ENCODE measurements at regions of chr19 and their contacts with region 1.

Region 1: DNA sequence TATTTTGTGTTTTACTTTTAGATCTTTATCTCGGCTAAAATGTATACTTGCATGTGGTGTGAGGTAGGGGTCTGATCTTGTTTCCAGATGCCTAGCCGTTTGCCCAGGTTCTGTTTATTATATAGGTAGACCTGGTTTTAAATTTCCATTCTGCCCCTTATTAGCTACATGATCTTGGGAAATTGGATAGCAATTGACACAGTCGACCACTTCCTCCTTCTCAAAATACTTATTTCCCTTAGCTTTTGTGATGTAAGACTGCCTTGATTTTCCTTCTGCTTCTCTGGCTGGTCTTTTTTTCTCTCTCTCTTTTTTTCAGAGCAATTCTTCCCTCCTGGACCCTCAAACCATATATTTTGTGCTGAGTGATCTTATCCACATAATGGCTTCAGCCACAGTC is 3.0 kb upstream of the PGLYRP1 start:
- DNase-seq: no peak
- ATAC-seq: no peak
- H3K4me3 ChIP-seq: no peak overlapping the region
- H3K27ac ChIP-seq: no peak overlapping the region
- H3K4me1 ChIP-seq: no peaks in the 10 kb centered on the region
- H3K27me3 ChIP-seq: peaks cover 2% of the 10 kb centered on the region

Region 2: GRCh38 chr19:46076951-46077816 is 51.3 kb after region 1 on chr19:
- intact Hi-C with region 1: loop called in 1 of 4 experiments (anchors 5 kb)
- DNase-seq: peak in 1 of 3 donors; percentile 22
- ATAC-seq: peak; percentile 73 to 86
- H3K4me3 ChIP-seq: no peak overlapping the region
- H3K27ac ChIP-seq: no peak overlapping the region
- H3K4me1 ChIP-seq: no peaks in the 10 kb centered on the region
- H3K27me3 ChIP-seq: peaks cover 4% of the 10 kb centered on the region

Region 3: GRCh38 chr19:46186101-46187100 is 160.6 kb after region 1 on chr19:
- intact Hi-C with region 1: loop called in 1 of 4 experiments (anchors 5 kb)
- DNase-seq: peak in 2 of 3 donors; percentile 52 to 62
- ATAC-seq: peak; percentile 33 to 34
- H3K4me3 ChIP-seq: no peak overlapping the region
- H3K27ac ChIP-seq: no peak overlapping the region
- H3K4me1 ChIP-seq: no peaks in the 10 kb centered on the region
- H3K27me3 ChIP-seq: no peaks in the 10 kb centered on the region

Region 4: DNA sequence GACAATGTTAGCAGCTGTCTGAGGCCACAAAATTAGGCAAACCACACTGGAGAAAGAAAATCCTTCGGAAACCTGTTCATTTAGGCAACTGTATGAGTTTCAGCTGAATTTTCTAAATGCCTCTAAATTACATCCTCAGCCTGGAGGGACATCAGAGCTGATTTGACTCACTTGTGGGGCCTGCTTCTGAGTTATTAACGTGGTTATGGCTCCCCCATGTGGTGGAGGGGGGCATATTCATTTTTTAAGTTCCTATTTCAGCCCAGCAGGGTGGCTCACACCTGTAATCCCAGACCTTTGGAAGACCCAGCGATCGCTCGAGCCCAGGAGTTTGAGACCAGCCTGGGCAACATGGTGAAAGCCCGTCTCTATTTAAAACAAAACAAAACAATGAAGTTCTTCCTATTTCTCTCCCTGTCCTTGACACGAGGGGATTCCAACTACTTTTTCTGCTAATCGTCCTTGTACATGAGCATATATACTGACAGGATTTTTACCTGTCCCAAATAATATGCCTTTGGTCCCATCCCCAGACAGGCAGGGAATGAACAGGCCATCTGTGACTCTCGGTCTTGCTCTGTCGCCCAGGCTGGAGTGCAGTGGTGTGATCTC is 239.5 kb after region 1 on chr19:
- intact Hi-C with region 1: loop called (anchors 2 to 5 kb)
- DNase-seq: peak in 1 of 3 donors; percentile 42
- ATAC-seq: peak; percentile 67 to 85
- H3K4me3 ChIP-seq: no peak overlapping the region
- H3K27ac ChIP-seq: no peak overlapping the region
- H3K4me1 ChIP-seq: no peaks in the 10 kb centered on the region
- H3K27me3 ChIP-seq: no peaks in the 10 kb centered on the region

Region 5: DNA sequence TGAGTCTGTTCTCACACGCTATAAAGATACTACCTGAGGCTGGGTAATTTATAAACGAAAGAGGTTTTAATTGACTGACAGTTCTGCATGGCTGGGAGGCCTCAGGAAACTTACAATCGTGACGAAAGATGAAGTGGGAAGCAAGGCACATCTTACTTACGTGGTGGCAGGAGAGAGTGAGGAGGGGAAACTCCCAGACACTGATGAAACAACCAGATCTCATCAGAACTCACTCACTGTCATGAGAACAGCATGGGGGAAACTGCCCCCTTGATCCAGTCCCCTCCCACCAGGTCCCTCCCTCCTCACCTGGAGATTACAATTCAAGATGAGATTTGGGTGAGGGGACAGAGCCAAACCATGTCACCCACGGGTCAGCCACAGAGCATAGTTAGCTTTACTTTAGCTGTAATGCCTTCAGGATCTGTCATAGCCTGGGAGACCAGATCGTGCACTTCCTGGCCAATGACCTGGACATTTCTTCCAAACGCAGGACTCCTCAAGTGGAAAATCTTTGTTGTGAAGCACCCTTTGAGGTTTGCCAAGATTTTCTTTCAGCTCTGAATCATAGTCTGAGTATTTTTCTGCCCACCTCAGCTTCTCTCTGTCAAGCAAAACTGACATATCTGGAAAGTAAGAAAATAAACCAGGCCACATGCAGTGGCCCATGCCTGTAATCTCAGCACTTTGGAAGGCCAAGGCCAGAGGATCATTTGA is 245.8 kb after region 1 on chr19:
- intact Hi-C with region 1: loop called in 2 of 4 experiments (anchors 2 to 5 kb)
- DNase-seq: no peak
- ATAC-seq: peak in 1 of 2 donors; percentile 50
- H3K4me3 ChIP-seq: no peak overlapping the region
- H3K27ac ChIP-seq: no peak overlapping the region
- H3K4me1 ChIP-seq: no peaks in the 10 kb centered on the region
- H3K27me3 ChIP-seq: no peaks in the 10 kb centered on the region